PC-3 (cell line): ENCODE measurements at regions of chr2 and their contacts with region 1.

Region 1: DNA sequence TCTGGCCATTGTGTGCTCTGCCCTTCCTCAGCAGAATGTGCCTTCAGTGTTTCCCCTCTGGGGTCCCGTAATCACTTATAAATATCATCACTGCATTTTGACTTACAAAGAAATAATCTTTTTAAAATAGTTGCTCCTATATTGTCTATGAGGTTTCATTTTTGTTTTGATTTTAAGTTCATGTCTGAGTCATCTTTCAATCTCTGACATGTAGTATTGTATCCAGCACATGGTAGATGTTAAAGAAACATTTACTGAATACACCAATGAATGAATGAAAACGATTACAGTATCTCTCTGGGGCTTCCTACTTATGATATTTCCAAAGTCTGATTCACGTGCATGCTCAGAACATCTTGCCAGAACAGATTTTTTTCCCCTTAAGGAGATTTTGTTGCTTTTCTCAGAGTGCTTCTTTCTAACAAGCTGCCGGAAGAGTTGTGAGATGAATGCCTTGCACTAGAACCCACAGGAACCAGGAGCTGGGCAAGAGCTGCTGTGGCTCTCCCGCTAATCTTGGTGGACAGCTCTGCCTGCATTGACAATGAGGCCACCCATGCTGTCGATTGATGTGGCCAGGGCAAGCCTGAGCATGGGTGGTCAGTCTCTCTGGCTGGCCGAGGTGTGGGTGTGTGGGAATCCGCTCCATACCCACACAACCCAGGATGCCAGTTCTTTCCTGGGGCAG is 199.4 kb downstream of the CYRIA start:
- DNase-seq: no peak
- ATAC-seq: no peak
- H3K4me3 ChIP-seq: no peak overlapping the region
- H3K27ac ChIP-seq: no peak overlapping the region
- H3K4me1 ChIP-seq: no peaks in the 10 kb centered on the region
- H3K27me3 ChIP-seq: no peaks in the 10 kb centered on the region
- CTCF ChIP-seq: no peak

Region 2: GRCh38 chr2:15808204-15808910 is 657.9 kb before region 1 on chr2:
- CTCF ChIA-PET with region 1: no interaction called
- POLR2A ChIA-PET with region 1: no interaction called
- intact Hi-C with region 1: no loop called
- DNase-seq: no peak
- ATAC-seq: no peak
- H3K4me3 ChIP-seq: no peak overlapping the region
- H3K27ac ChIP-seq: no peak overlapping the region
- H3K4me1 ChIP-seq: no peaks in the 10 kb centered on the region
- H3K27me3 ChIP-seq: peaks cover 70% of the 10 kb centered on the region
- CTCF ChIP-seq: no peak

Region 3: DNA sequence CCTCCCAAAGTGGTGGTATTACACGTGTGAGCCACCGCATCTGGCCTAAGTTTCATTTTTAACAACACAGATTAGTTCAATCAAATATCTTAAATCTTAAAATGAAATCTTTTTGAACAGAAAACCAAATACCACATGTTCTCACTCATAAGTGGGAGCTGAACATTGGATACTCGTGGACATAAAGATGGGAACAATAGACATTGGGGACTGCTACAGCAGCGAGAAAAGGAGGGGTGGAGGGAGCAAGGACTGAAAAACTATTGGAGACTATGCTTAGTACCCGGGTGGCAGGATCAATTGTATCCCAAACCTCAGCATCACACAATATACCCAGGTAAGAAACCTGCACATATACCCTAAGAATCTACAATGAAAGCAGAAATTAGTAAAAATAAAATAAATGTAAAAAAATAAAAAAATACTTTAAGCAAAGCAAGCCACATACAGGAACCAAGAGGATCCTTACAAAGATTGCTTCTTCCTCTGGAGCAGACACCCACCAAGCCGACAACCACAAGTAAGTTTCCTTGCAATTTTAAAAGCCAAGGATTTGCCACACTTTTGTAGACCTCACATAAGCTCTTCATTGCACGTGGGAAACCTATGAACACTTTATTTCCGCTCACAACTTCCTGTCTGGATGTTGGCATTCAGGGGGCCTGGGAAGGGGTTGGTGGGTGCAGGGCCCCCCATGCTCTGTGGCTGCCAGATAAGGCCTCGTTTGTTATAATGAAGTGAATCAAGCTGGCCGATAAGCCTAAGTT is 378.1 kb before region 1 on chr2:
- CTCF ChIA-PET with region 1: no interaction called
- POLR2A ChIA-PET with region 1: interaction called, 34 read pairs
- intact Hi-C with region 1: no loop called
- DNase-seq: no peak
- ATAC-seq: no peak
- H3K4me3 ChIP-seq: no peak overlapping the region
- H3K27ac ChIP-seq: no peak overlapping the region
- H3K4me1 ChIP-seq: no peaks in the 10 kb centered on the region
- H3K27me3 ChIP-seq: no peaks in the 10 kb centered on the region
- CTCF ChIP-seq: no peak

Region 4: GRCh38 chr2:16394072-16394985 is 71.9 kb before region 1 on chr2:
- CTCF ChIA-PET with region 1: no interaction called
- POLR2A ChIA-PET with region 1: no interaction called
- intact Hi-C with region 1: no loop called
- DNase-seq: no peak
- ATAC-seq: no peak
- H3K4me3 ChIP-seq: no peak overlapping the region
- H3K27ac ChIP-seq: no peak overlapping the region
- H3K4me1 ChIP-seq: no peaks in the 10 kb centered on the region
- H3K27me3 ChIP-seq: no peaks in the 10 kb centered on the region
- CTCF ChIP-seq: no peak

Region 5: GRCh38 chr2:16537347-16537746 is 71.1 kb after region 1 on chr2:
- CTCF ChIA-PET with region 1: no interaction called
- POLR2A ChIA-PET with region 1: no interaction called
- intact Hi-C with region 1: no loop called
- DNase-seq: peak; percentile 3
- ATAC-seq: no peak
- H3K4me3 ChIP-seq: no peak overlapping the region
- H3K27ac ChIP-seq: no peak overlapping the region
- H3K4me1 ChIP-seq: no peaks in the 10 kb centered on the region
- H3K27me3 ChIP-seq: no peaks in the 10 kb centered on the region
- CTCF ChIP-seq: no peak

Region 6: GRCh38 chr2:17245906-17246305 is 779.6 kb after region 1 on chr2:
- CTCF ChIA-PET with region 1: no interaction called
- POLR2A ChIA-PET with region 1: no interaction called
- intact Hi-C with region 1: no loop called
- DNase-seq: no peak
- ATAC-seq: no peak
- H3K4me3 ChIP-seq: no peak overlapping the region
- H3K27ac ChIP-seq: no peak overlapping the region
- H3K4me1 ChIP-seq: no peaks in the 10 kb centered on the region
- H3K27me3 ChIP-seq: no peaks in the 10 kb centered on the region
- CTCF ChIP-seq: no peak